Psoas muscle (tissue), 8 donors: ENCODE measurements at regions of chr9 and their contacts with region 1.

Region 1: DNA sequence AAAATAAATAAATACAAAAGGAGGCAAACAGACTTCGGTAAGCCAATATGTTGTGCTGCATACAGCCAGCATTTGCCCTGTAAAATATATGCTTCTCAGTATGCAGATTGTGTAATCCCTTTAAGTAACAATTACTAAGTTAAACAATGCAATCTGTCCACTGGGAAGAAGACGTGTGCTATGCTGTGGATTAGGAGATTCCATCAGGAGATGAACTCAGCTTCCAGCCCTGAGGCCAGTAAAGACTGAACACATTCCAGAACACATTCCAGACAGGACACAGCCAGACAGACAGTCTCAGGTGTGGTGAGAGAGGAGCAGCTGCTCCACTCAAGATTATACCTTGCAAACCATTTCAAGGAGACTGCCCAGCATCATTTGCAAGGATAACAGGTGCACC is 97.8 kb downstream of the MPDZ start:
- DNase-seq: no peak
- ATAC-seq: peak in 2 of 4 donors; percentile 20 to 40
- H3K4me3 ChIP-seq: no peak overlapping the region
- H3K27ac ChIP-seq: no peak overlapping the region
- H3K4me1 ChIP-seq: no peaks in the 10 kb centered on the region
- H3K27me3 ChIP-seq: no peaks in the 10 kb centered on the region
- CTCF ChIP-seq: no peak

Region 2: DNA sequence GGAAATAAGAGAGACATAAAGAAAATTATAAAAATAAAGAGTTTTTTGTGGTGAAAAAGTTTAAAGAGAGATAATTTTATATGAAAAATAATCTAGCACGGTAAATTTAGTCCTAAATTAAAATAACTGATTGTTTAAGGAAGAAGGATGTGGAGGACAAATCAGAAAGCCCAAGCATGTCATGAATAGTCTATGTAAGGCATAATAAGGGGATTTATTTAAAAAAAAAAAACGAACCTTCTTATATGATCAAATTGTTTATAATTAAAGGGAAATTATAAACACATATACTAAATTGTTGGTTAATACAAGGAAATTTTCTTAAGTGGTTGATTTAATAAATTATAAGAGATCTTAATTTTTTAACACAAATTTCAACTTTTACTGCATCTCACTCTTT is 1040.2 kb before region 1 on chr9:
- intact Hi-C with region 1: no loop called
- DNase-seq: no peak
- ATAC-seq: no peak
- H3K4me3 ChIP-seq: no peak overlapping the region
- H3K27ac ChIP-seq: no peak overlapping the region
- H3K4me1 ChIP-seq: no peaks in the 10 kb centered on the region
- H3K27me3 ChIP-seq: no peaks in the 10 kb centered on the region
- CTCF ChIP-seq: no peak

Region 3: DNA sequence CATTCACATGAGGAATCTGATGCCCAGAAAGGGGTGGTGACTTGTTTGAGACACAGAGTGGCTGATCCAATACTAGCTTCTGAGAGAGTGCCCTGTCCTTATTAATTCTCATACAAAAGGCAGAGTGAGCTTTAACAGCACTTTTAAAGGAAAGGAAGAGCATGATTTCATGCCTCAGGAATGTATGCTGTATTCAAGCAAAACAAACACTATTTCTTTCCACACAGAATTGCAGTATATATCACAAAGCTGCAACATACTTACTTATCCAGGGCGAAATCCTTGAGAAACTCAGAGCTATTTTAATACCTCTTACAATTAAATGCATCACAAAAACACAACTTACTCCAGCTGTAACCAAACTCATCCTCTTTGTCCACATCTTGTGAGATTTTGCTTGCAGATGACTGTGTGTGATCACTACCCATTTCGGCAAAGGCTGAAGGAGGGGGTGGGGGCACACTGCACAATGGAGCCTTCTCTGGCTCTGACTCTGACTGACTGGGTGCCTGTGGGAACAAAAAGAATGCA is 41.9 kb before region 1 on chr9:
- intact Hi-C with region 1: loop called in 1 of 2 experiments (anchors 10 kb)
- DNase-seq: no peak
- ATAC-seq: no peak
- H3K4me3 ChIP-seq: no peak overlapping the region
- H3K27ac ChIP-seq: no peak overlapping the region
- H3K4me1 ChIP-seq: peaks cover 44% of the 10 kb centered on the region
- H3K27me3 ChIP-seq: no peaks in the 10 kb centered on the region
- CTCF ChIP-seq: no peak